ENCODE measurements at regions of chr22 and their contacts with region 1.

Region 1: DNA sequence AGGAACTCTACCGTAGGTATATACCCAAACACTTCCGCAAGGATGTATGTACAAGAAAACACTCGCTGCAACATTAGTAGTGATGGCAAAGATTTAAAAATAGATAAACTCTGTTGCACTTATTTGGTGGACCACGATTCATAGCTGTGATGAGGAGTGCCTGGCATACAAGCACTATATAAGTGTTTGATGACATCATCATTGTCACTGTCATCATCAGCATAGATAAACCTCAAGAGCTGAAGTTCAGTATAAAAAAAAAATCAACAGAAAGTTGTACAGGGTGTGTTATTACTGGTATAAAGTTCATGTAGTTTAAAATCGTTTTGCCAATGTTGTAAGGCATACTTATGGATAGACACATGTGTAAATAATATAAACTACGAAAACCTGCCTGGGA is 24.0 kb upstream of the NUP50 start:
- DNase-seq: no peak
- H3K4me3 Mint-ChIP-seq: no peak overlapping the region
- H3K27ac Mint-ChIP-seq: no peak overlapping the region
- H3K4me1 Mint-ChIP-seq: peaks cover 8% of the 10 kb centered on the region
- H3K27me3 Mint-ChIP-seq: no peaks in the 10 kb centered on the region

Region 2: GRCh38 chr22:45107671-45108070 is 32.0 kb before region 1 on chr22:
- CTCF ChIA-PET with region 1: no interaction called
- POLR2A ChIA-PET with region 1: interaction called, 10 read pairs
- DNase-seq: no peak
- H3K4me3 Mint-ChIP-seq: no peak overlapping the region
- H3K27ac Mint-ChIP-seq: no peak overlapping the region
- H3K4me1 Mint-ChIP-seq: no peaks in the 10 kb centered on the region
- H3K27me3 Mint-ChIP-seq: peaks cover 4% of the 10 kb centered on the region

Measured in activated CD4-positive, alpha-beta T cell treated with anti-CD3 and anti-CD28 coated beads, Interleukin-2, amount 10 ng/mL, durations not matched to agents 7 days and 5 days (primary cell).